ENCODE measurements at regions of chr20 and their contacts with region 1.

Region 1: GRCh38 chr20:52060794-52061714 is 130.5 kb downstream of the ZFP64 start:
- DNase-seq: peak; percentile 82
- H3K4me3 ChIP-seq: no peak overlapping the region
- H3K27ac ChIP-seq: peak overlapping the region; percentile 62
- H3K4me1 ChIP-seq: peaks cover 9% of the 10 kb centered on the region
- H3K27me3 ChIP-seq: no peaks in the 10 kb centered on the region
- CTCF ChIP-seq: peak; percentile 50 to 55
- POLR2A ChIP-seq: no peak

Region 2: DNA sequence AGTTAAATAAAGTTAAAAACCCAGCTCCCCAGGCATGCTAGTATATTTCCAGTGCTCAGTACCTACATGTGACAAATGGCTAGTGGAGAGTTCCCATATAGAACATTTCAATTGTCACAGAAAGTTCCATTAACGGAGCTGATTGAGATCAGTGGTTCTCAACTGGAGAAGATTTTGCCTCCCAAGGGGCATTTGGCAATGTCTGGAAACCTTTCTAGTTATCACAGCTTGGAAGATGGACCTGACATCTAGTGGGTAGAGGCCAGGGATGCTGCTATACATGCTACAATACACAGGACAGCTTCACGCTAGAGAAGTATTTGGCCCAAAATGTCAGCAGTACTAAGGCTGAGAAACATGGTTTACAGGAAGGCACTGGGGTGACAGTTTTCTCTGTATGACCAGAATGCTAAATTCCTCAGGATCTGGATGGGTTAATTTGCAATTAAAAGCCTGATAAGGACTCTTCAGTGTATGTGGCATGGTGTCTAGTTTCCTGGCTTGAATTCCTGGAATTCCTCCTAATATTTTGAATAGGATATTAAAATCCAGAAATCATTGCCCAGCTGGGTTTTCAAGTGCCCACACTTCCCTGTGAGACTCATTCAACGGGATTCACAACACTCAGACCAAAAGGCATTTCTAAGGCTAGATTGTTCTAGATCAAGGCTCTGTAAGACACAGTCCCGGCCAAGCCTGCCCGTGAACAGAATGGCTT is 174.0 kb before region 1 on chr20:
- CTCF ChIA-PET with region 1: no interaction called
- POLR2A ChIA-PET with region 1: no interaction called
- dilution Hi-C with region 1: no loop called
- intact Hi-C with region 1: loop called (anchors 1 kb)
- DNase-seq: peak; percentile 39
- H3K4me3 ChIP-seq: no peak overlapping the region
- H3K27ac ChIP-seq: peak overlapping the region; percentile 18
- H3K4me1 ChIP-seq: peaks cover 7% of the 10 kb centered on the region
- H3K27me3 ChIP-seq: no peaks in the 10 kb centered on the region
- CTCF ChIP-seq: no peak
- POLR2A ChIP-seq: no peak

Region 3: GRCh38 chr20:51966291-51966971 is 94.6 kb before region 1 on chr20:
- CTCF ChIA-PET with region 1: interaction called, 28 read pairs
- POLR2A ChIA-PET with region 1: no interaction called
- dilution Hi-C with region 1: no loop called
- intact Hi-C with region 1: loop called (anchors 1 kb)
- DNase-seq: peak; percentile 77
- H3K4me3 ChIP-seq: no peak overlapping the region
- H3K27ac ChIP-seq: no peak overlapping the region
- H3K4me1 ChIP-seq: no peaks in the 10 kb centered on the region
- H3K27me3 ChIP-seq: no peaks in the 10 kb centered on the region
- CTCF ChIP-seq: peak; percentile 73 to 74
- POLR2A ChIP-seq: no peak

Region 4: GRCh38 chr20:52001999-52002666 is 58.9 kb before region 1 on chr20:
- CTCF ChIA-PET with region 1: interaction called, 4 read pairs
- POLR2A ChIA-PET with region 1: no interaction called
- dilution Hi-C with region 1: no loop called
- intact Hi-C with region 1: loop called (anchors 1 kb)
- DNase-seq: peak; percentile 93
- H3K4me3 ChIP-seq: no peak overlapping the region
- H3K27ac ChIP-seq: peak overlapping the region; percentile 85
- H3K4me1 ChIP-seq: peaks cover 17% of the 10 kb centered on the region
- H3K27me3 ChIP-seq: no peaks in the 10 kb centered on the region
- CTCF ChIP-seq: peak; percentile 34 to 49
- POLR2A ChIP-seq: no peak

Region 5: DNA sequence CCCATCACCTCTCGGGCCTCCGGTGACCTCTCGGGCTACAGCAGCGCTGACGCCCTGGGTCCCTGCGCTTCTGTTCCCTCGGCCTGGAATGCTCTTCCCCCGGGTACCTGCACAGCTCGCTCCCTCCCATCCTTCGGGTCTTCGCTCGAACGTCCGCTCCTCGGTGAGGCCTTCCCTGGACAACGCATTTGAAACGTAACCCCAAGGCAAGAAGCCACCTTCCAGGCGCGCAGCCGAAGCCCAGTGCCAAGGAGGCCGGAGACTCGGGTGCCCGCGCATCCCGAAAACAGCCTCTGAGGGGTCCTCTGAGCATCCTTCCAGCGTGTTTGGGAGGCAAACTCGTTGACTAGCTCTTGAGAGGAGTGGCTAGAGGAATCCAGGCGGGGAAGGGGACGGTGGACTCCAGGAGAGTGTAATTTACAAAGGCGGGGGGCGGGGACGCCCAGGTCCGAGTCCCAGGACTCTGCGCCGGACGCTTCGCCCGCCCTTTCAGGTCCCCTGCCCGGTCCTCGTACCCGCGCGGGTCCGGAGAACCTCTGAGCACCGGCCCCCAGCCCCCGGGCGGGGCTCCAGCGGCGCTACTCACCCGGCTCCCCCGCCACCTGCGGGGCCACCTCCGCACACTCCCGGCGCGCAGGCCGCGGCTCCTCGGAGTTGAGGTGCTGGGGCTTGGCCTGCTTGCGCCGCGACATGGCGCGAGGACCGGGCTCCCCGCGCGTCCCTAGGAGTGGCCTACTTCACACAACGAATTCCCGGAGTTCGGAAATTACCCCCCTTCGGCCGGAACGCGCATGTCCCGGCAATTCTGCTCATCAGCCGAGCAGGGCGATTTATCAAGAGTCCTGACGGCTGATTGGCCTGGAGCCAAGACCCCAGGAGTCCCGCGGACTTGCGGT is 43.7 kb after region 1 on chr20:
- CTCF ChIA-PET with region 1: no interaction called
- POLR2A ChIA-PET with region 1: no interaction called
- dilution Hi-C with region 1: no loop called
- intact Hi-C with region 1: no loop called
- DNase-seq: peak; percentile 56
- H3K4me3 ChIP-seq: peak overlapping the region; percentile 43 to 71 (median 64)
- H3K27ac ChIP-seq: peak overlapping the region; percentile 37
- H3K4me1 ChIP-seq: peaks cover 26% of the 10 kb centered on the region
- H3K27me3 ChIP-seq: no peaks in the 10 kb centered on the region
- CTCF ChIP-seq: no peak
- POLR2A ChIP-seq: no peak